T-cell (primary cell): ENCODE measurements at regions of chr11 and their contacts with region 1.

Region 1: GRCh38 chr11:67265633-67266423 is 445 bp upstream of the GRK2 start:
- DNase-seq: peak; percentile 40 to 90 (median 65)
- ATAC-seq: peak; percentile 59 to 70 (median 62)
- H3K4me3 ChIP-seq: no peak overlapping the region
- H3K4me3 Mint-ChIP-seq: peak overlapping the region; percentile 77 to 99 (median 80)
- H3K27ac ChIP-seq: peak overlapping the region; percentile 66
- H3K27ac Mint-ChIP-seq: peak overlapping the region; percentile 88 to 89
- H3K4me1 ChIP-seq: peaks cover 30 to 79% of the 10 kb centered on the region in 2 experiments
- H3K4me1 Mint-ChIP-seq: peaks cover 55 to 72% (median 59%) of the 10 kb centered on the region in 3 donors
- H3K27me3 ChIP-seq: peaks cover 0 to 13% of the 10 kb centered on the region in 2 experiments
- H3K27me3 Mint-ChIP-seq: peaks cover 0 to 4% of the 10 kb centered on the region in 2 donors

Region 2: DNA sequence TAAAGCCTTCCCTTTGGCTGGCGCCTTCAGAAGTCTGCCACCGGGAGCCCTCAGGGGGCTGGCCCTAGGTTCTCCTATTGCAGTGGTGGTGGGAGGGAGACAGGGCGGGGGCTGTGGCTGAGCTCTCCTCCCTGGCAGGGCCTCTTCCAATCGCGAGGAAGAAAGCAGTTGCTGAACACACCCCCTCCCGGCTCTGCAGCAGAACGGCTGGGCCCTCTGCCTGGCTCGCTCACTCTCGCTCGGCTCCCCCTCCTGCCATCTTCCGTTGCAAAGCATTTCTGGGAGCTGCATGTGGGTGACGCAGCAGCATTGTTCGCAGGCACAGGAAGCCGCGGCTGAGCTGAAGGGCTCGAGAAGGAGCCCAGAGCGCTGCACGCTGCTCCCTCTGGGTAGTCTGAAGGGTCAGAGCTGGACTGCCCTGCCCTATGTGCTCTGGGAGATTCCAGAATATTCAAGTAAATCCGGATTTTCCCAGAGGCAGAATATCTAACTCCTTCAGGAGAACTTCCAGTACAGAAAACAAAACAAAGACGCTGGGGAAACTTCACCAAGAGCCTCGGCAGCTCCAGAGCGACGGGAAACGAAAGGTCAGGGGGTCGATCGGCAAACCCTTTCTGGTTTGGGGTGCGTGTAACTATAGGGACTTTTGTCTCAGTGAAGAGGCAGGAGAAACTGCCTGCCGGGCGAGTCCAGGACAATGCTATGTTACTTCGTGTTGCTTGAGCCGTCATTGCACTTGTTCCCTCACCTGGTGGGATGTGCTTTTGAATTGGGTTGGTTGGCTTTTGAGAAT is 25.8 kb before region 1 on chr11:
- CTCF ChIA-PET with region 1: interaction called in 1 of 2 experiments, 14 read pairs
- POLR2A ChIA-PET with region 1: interaction called in 1 of 2 experiments, 3 read pairs
- DNase-seq: peak; percentile 83 to 99 (median 98)
- ATAC-seq: peak; percentile 88 to 97 (median 94)
- H3K4me3 ChIP-seq: peak overlapping the region; percentile 87 to 91
- H3K4me3 Mint-ChIP-seq: peak overlapping the region; percentile 99 to 100 (median 100)
- H3K27ac ChIP-seq: peak overlapping the region; percentile 98
- H3K27ac Mint-ChIP-seq: peak overlapping the region; percentile 99 to 100
- H3K4me1 ChIP-seq: peaks cover 31 to 49% of the 10 kb centered on the region in 2 experiments
- H3K4me1 Mint-ChIP-seq: peaks cover 51 to 59% (median 55%) of the 10 kb centered on the region in 3 donors
- H3K27me3 ChIP-seq: no peaks in the 10 kb centered on the region
- H3K27me3 Mint-ChIP-seq: no peaks in the 10 kb centered on the region

Region 3: GRCh38 chr11:67317205-67317887 is 51.5 kb after region 1 on chr11:
- CTCF ChIA-PET with region 1: interaction called in 1 of 2 experiments, 20 read pairs
- POLR2A ChIA-PET with region 1: interaction called in 1 of 2 experiments, 6 read pairs
- DNase-seq: peak; percentile 91 to 99 (median 97)
- ATAC-seq: peak; percentile 83 to 86 (median 84)
- H3K4me3 ChIP-seq: peak overlapping the region; percentile 68 to 93
- H3K4me3 Mint-ChIP-seq: peak overlapping the region; percentile 93 to 98 (median 94)
- H3K27ac ChIP-seq: peak overlapping the region; percentile 67
- H3K27ac Mint-ChIP-seq: peak overlapping the region; percentile 95 to 98
- H3K4me1 ChIP-seq: peaks cover 11 to 48% of the 10 kb centered on the region in 2 experiments
- H3K4me1 Mint-ChIP-seq: peaks cover 35 to 60% (median 43%) of the 10 kb centered on the region in 3 donors
- H3K27me3 ChIP-seq: no peaks in the 10 kb centered on the region
- H3K27me3 Mint-ChIP-seq: no peaks in the 10 kb centered on the region